ENCODE measurements at regions of chr20 and their contacts with region 1.

Region 1: DNA sequence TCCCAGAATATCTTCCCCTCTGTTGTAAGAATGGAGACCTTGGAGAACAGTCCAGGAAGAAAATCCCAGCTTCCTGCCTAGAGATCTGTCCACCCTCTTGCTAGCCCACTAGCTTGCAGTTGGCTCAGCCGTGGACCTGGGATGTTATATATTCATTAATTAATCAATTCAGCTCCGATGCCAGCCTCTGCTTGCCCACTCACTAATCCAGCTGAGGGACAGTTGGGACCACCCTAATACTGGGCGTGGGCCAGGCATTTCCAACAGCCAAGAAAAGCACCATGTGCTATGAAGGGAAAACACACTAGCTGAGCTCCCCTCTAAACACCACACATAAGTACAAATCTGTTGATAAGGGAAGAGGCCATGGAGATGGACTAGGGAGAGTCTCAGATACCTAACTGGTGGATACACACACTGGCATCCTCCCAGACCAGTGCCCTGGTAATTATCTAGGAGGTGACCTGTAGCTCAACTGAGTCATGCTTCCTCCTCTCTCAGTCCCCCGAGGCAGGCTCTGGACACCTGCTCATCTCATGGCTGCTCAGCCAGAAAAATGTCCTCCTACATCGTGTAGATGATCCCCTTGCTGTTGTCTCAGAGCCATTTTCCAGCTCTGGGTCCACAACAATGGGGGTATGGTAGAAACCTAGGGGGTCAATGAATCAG is 78.9 kb downstream of the ANKRD60 start:
- DNase-seq: peak in 1 of 2 donors; percentile 54
- H3K4me3 ChIP-seq: no peak overlapping the region
- H3K27ac ChIP-seq: peak overlapping the region; percentile 94 to 95
- H3K4me1 ChIP-seq: peaks cover 5 to 60% (median 51%) of the 10 kb centered on the region in 4 donors
- H3K27me3 ChIP-seq: peaks cover 0 to 2% of the 10 kb centered on the region in 2 donors
- CTCF ChIP-seq: no peak

Region 2: DNA sequence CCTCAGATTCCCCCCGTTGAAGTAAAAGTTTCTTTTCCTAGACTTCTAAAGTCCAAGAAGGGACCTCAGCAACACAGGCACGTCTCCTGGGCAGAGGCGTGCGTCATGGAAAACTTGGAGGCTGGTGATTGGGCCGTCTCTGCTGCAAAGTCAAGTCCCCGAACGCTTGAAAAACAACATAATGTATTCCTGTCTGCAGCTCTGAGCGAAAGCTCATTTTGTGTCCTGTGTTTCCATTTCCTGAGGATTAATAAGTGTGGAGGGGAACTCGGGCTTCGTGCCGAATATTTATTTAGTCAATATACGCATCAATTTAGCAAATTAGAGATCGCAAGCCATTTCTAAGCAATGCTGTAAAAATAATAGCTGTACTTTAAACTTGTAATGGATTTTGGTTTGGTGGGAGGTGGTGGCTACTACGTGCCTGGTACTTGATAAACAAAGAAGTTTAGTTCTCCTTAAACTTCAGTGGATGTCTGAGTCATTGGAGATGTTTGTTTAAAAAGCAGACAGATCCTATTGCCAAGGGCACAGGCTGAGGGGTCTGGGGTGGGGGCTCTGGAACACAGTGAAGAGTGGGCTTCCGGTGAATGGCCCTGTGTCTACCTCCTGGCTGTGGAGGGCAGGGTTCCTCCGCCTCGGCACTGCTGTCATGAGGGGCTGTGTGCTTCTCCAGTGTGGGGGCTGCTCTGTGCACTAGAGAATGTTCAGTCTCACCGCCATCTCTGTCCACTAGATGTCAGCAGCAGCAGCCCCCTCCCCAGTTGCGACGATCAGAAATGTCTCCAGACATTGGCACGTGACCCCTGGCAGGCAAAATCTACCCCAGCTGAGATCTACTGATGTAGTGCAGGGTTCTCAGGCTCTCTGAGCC is 566.9 kb before region 1 on chr20:
- intact Hi-C with region 1: loop called (anchors 10 kb)
- DNase-seq: peak; percentile 74 to 94
- H3K4me3 ChIP-seq: peak overlapping the region; percentile 19 to 32
- H3K27ac ChIP-seq: peak overlapping the region; percentile 87 to 95
- H3K4me1 ChIP-seq: peaks cover 0 to 73% (median 29%) of the 10 kb centered on the region in 4 donors
- H3K27me3 ChIP-seq: peaks cover 0 to 18% of the 10 kb centered on the region in 2 donors
- CTCF ChIP-seq: peak; percentile 31 to 35

Region 3: DNA sequence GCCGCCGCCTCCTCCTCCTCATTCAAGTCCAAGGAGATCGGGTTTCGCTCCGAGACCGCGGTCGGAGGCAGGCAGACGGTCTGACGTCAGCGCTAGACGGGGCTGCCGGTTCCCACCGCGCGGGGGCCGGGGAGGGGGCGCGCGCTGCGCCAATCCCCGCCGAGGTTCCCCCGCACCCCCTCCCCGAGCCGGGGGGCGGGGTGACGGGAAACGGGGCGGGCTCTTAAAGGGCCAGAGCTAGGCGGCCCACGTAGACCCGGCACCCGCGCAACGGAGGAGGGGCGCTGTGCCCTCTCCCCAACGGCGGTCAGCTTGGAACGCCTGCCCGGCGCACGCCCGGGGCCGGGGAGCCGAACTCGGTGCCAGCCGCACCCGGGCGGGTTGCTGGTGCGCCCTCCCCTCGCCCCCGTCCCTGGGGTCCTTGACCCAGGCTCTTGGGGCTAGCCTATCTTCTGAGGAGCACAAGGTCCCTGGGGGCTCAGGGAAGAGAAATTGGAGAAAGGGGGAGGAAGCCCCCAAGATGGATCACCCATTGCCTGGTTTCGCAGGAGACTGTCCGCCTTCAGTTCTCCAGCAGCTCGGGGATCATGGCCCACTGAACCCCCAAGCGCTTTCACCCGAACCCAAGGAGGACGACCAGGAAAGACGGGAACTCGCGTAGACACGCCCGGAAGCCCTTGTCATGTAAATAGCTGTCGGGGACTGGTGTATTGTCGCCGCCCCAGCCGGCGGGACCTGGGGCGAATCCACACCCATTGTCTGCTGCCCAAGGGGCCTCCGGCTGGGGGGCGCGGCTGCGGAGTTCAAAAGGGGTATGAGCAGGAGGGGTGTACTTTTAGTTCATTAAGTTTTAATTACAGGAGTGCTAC is 439.4 kb before region 1 on chr20 and contains the start of gene PMEPA1:
- intact Hi-C with region 1: loop called (anchors 2 kb)
- DNase-seq: peak; percentile 94 to 98
- H3K4me3 ChIP-seq: peak within 1 kb of the TSS; percentile 86 to 89
- H3K27ac ChIP-seq: peak within 1 kb of the TSS; percentile 96 to 97
- H3K4me1 ChIP-seq: peaks cover 8 to 76% (median 69%) of the 10 kb centered on the region in 4 donors
- H3K27me3 ChIP-seq: no peaks in the 10 kb centered on the region
- CTCF ChIP-seq: peak; percentile 11 to 26

Measured in tibial artery (tissue), 4 donors.